ENCODE measurements at regions of chr2 and their contacts with region 1.

Region 1: GRCh38 chr2:84022810-84023431 is 436.2 kb downstream of the SUCLG1 start:
- DNase-seq: peak; percentile 30
- ATAC-seq: no peak
- H3K4me3 ChIP-seq: no peak overlapping the region
- H3K27ac ChIP-seq: no peak overlapping the region
- H3K4me1 ChIP-seq: no peaks in the 10 kb centered on the region; the same call in 1 of the 2 replicates
- H3K27me3 ChIP-seq: no peaks in the 10 kb centered on the region
- CTCF ChIP-seq: peak; percentile 73; the same call in 1 of the 2 replicates

Region 2: GRCh38 chr2:84302513-84303412 is 279.8 kb after region 1 on chr2:
- CTCF ChIA-PET with region 1: interaction called, 7 read pairs
- POLR2A ChIA-PET with region 1: no interaction called
- in situ Hi-C with region 1: no loop called
- intact Hi-C with region 1: loop called (anchors 1 kb)
- DNase-seq: peak; percentile 61
- ATAC-seq: peak; percentile 88
- H3K4me3 ChIP-seq: no peak overlapping the region
- H3K27ac ChIP-seq: no peak overlapping the region
- H3K4me1 ChIP-seq: no peaks in the 10 kb centered on the region
- H3K27me3 ChIP-seq: no peaks in the 10 kb centered on the region
- CTCF ChIP-seq: peak; percentile 88

Measured in Panc1 (cell line).